ENCODE measurements at regions of chr3 and their contacts with region 1.

Region 1: GRCh38 chr3:67113802-67114407 is 115.8 kb downstream of the KBTBD8 start:
- DNase-seq: peak; percentile 87
- H3K4me3 ChIP-seq: no peak overlapping the region
- H3K27ac ChIP-seq: no peak overlapping the region
- H3K4me1 ChIP-seq: no peaks in the 10 kb centered on the region
- H3K27me3 ChIP-seq: no peaks in the 10 kb centered on the region
- CTCF ChIP-seq: peak; percentile 93 to 96
- POLR2A ChIP-seq: no peak

Region 2: GRCh38 chr3:66253790-66254620 is 859.9 kb before region 1 on chr3:
- CTCF ChIA-PET with region 1: interaction called, 4 read pairs
- POLR2A ChIA-PET with region 1: no interaction called
- dilution Hi-C with region 1: no loop called
- intact Hi-C with region 1: loop called (anchors 10 kb)
- DNase-seq: peak; percentile 65
- H3K4me3 ChIP-seq: no peak overlapping the region
- H3K27ac ChIP-seq: no peak overlapping the region
- H3K4me1 ChIP-seq: peaks cover 6% of the 10 kb centered on the region
- H3K27me3 ChIP-seq: no peaks in the 10 kb centered on the region
- CTCF ChIP-seq: peak; percentile 28 to 41
- POLR2A ChIP-seq: no peak

Region 3: DNA sequence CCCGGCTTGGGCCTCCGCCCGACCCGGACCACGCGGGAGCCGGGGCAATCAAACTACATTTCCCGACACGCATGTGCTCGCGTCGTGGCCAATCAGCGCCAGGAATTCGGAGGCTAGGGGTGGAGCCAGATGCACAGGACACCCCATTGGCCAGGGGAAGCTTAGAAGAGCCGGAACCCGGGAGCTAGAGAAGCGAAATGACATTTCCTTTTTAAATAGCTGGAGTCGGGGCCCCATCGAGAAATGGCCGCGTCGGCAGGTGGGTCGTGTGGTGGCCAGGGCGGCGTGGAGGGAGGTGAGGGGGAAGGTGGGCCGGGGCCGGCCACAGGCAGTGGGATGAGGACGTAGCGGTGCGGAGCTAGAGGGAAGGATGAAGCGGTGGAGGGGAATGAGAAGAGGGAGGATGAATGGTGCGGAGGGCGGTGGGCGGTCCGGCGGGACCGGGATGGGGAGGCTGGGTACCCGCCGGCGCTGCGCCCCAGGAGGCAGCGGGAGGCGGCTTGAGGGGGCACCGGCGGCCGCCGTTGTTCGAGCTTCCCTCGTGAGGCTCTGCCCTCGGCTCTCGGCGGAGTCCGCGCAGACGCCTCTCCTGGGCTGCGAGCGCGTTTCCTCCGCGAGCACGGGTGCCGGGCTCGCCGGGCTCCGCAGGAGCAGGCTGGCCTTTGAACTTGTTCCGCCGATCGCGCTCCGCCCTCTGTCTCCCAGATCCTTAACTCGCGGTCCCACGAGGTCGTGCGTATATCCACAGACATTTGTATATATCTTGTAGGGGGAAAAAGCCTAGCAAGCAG is 115.6 kb before region 1 on chr3 and contains the start of gene KBTBD8:
- CTCF ChIA-PET with region 1: interaction called, 22 read pairs
- POLR2A ChIA-PET with region 1: no interaction called
- dilution Hi-C with region 1: no loop called
- intact Hi-C with region 1: loop called (anchors 2 kb)
- DNase-seq: peak; percentile 99
- H3K4me3 ChIP-seq: peak within 1 kb of the TSS; percentile 76 to 93 (median 82)
- H3K27ac ChIP-seq: peak within 1 kb of the TSS; percentile 35
- H3K4me1 ChIP-seq: peaks cover 17% of the 10 kb centered on the region
- H3K27me3 ChIP-seq: peaks cover 0 to 15% of the 10 kb centered on the region in 2 experiments
- CTCF ChIP-seq: no peak
- POLR2A ChIP-seq: peak; percentile 45
- total RNA-seq, gene KBTBD8: 1.1 and 3.2 TPM in 2 replicates

Region 4: DNA sequence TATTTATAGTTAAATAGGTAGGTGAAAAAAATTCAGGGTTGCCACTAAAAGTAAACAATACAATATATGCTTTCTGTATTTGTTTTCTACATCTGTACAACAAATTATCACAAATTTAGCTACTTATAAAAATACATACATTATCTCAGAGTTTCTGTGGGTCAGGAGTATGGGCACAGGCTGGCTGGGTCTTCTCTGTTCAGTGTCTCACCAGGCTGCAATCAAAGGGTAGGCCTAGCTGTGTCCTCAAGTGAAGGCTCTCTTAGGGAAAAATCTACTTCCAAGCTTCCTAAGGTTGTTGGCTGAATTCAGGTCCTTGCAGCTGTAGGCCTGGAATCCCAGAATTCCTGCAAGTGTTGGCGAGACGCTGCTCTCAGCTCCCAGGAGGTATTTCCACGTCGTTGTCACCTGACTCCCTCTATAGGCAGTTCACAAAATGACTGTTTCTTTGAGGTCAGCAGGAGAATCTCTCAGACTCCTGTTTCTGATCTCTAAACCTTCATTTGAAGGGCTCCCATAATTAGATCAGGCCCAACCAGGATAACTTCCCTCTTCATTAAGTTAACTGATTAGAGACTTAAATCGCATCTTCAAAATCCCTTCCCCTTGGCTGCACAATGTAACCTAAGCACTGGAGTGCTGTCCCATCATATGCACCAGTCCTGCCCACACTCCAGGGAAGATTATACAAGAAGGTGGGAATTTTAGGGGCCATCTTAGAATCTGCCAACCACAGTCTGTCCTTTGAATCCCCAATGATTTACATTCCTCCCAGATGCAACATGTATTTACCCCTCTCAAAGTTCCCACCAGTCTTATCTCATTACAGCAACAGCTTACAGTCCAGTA is 243.9 kb after region 1 on chr3:
- CTCF ChIA-PET with region 1: interaction called, 19 read pairs
- POLR2A ChIA-PET with region 1: no interaction called
- dilution Hi-C with region 1: no loop called
- intact Hi-C with region 1: loop called (anchors 5 kb)
- DNase-seq: peak; percentile 26
- H3K4me3 ChIP-seq: no peak overlapping the region
- H3K27ac ChIP-seq: no peak overlapping the region
- H3K4me1 ChIP-seq: no peaks in the 10 kb centered on the region
- H3K27me3 ChIP-seq: no peaks in the 10 kb centered on the region
- CTCF ChIP-seq: peak; percentile 15 to 36
- POLR2A ChIP-seq: no peak

Region 5: GRCh38 chr3:67863869-67864268 is 750.0 kb after region 1 on chr3:
- CTCF ChIA-PET with region 1: interaction called, 13 read pairs
- POLR2A ChIA-PET with region 1: no interaction called
- dilution Hi-C with region 1: no loop called
- intact Hi-C with region 1: no loop called
- DNase-seq: peak; percentile 9
- H3K4me3 ChIP-seq: no peak overlapping the region
- H3K27ac ChIP-seq: no peak overlapping the region
- H3K4me1 ChIP-seq: no peaks in the 10 kb centered on the region
- H3K27me3 ChIP-seq: no peaks in the 10 kb centered on the region
- CTCF ChIP-seq: peak; percentile 11 to 25
- POLR2A ChIP-seq: no peak

Region 6: GRCh38 chr3:68893600-68894239 is 1779.8 kb after region 1 on chr3:
- CTCF ChIA-PET with region 1: interaction called, 68 read pairs
- POLR2A ChIA-PET with region 1: no interaction called
- dilution Hi-C with region 1: no loop called
- intact Hi-C with region 1: loop called (anchors 1 kb)
- DNase-seq: peak; percentile 63
- H3K4me3 ChIP-seq: no peak overlapping the region
- H3K27ac ChIP-seq: no peak overlapping the region
- H3K4me1 ChIP-seq: no peaks in the 10 kb centered on the region
- H3K27me3 ChIP-seq: peaks cover 4 to 5% of the 10 kb centered on the region in 2 experiments
- CTCF ChIP-seq: peak in 1 of 2 donors; percentile 15
- POLR2A ChIP-seq: no peak

Measured in endothelial cell of umbilical vein (primary cell).